PC-9 (cell line): ENCODE measurements at regions of chr1 and their contacts with region 1.

Region 1: DNA sequence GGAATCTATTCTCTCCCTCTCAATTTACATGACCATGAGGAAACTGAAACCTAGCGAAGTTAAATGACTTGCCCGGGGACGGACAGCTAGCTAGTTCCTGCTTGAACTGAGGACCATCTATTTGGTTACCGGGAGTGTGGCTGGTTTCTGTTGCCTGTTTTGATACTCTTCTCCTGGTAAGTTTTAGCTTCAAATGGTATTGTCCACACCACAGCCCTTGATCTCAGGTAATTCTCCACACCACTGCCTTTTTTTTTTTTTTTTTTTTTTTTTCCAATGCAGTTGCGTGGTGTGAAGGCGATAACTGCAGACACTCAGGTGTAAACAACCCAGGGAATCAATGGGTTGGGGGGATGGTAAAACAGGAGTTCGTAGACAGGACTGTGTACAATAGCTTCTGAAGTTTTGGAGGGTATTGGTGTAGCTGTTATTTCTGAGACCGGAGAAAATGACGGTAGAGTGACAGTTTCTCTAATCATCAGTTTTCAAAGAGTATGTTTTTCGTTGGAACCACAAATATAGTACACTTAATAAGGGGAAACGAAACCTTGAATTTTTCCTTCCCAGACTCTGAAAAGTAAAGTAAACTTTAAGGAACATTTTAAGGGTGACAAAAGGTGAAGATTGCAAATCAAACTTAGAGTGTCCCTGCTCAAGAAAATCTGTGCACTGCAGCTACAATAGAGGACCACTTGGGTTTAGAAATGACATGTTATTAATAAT is 125.3 kb upstream of the CACYBP start:
- DNase-seq: peak; percentile 30 to 50
- H3K4me3 ChIP-seq: peak overlapping the region; percentile 43
- H3K27ac ChIP-seq: peak overlapping the region; percentile 83
- H3K4me1 ChIP-seq: peaks cover 60% of the 10 kb centered on the region
- H3K27me3 ChIP-seq: no peaks in the 10 kb centered on the region
- CTCF ChIP-seq: no peak

Region 2: GRCh38 chr1:174789399-174789798 is 85.1 kb before region 1 on chr1:
- CTCF ChIA-PET with region 1: no interaction called
- POLR2A ChIA-PET with region 1: interaction called, 20 read pairs
- intact Hi-C with region 1: loop called (anchors 2 kb)
- DNase-seq: peak; percentile 3 to 51
- H3K4me3 ChIP-seq: no peak overlapping the region
- H3K27ac ChIP-seq: peak overlapping the region; percentile 90
- H3K4me1 ChIP-seq: peaks cover 31% of the 10 kb centered on the region
- H3K27me3 ChIP-seq: no peaks in the 10 kb centered on the region
- CTCF ChIP-seq: no peak

Region 3: DNA sequence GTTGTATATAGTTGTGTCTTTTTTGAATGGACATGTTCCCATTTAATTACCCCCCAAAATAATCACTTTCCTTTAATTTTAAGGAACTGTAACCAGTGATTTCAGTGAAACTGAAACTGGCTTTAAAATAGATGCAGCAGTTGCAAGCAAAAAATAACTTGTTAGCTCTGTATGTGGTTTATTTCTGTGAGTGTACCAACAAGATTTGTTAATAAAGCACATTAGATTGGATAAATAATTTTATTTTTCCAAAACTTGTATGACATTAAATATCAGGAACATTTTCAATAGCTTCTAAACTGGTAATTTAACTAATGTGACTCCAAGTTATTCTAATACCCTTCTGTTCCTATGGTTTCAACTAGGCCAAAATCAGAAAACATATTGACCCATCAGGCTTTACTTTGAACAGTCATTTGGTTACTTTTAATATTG is 59.0 kb before region 1 on chr1:
- CTCF ChIA-PET with region 1: interaction called, 17 read pairs
- POLR2A ChIA-PET with region 1: interaction called, 39 read pairs
- intact Hi-C with region 1: no loop called
- DNase-seq: no peak
- H3K4me3 ChIP-seq: no peak overlapping the region
- H3K27ac ChIP-seq: 0 out of 2 replicates have a peak overlapping the region, but pooled peaks have one; percentile 41
- H3K4me1 ChIP-seq: peaks cover 20% of the 10 kb centered on the region
- H3K27me3 ChIP-seq: no peaks in the 10 kb centered on the region
- CTCF ChIP-seq: no peak

Region 4: DNA sequence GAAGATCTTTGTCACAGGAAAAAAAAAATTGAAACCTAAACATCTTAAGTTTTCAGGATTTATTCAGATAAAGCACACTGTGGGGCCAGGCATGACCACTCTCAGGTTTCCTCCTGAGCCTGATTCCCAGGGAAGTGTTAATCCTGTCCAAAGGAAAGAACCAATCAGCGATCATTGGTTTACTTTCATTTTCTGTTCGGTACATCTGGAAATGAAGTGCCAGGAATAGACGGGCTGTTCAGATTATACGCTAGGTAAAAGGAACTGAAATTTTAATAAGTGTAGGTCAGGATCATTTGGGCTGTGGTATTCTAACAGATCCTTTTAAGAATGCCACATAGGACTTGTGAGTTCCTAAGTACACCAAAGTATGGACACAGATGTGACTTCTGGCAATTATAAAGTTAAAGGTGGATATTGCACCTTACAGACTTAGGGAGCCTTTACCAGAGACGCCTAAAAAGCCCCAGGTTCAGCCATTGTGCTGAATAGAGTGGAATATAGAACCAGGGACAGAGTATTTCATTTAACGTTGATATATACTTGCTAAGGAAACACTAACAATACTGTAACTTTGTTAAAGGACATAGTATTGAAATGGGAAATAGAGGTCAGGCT is 116.0 kb after region 1 on chr1:
- CTCF ChIA-PET with region 1: interaction called, 13 read pairs
- POLR2A ChIA-PET with region 1: no interaction called
- intact Hi-C with region 1: no loop called
- DNase-seq: no peak
- H3K4me3 ChIP-seq: peak overlapping the region; percentile 12; the same call in 1 of the 2 replicates
- H3K27ac ChIP-seq: no peak overlapping the region
- H3K4me1 ChIP-seq: no peaks in the 10 kb centered on the region
- H3K27me3 ChIP-seq: no peaks in the 10 kb centered on the region
- CTCF ChIP-seq: no peak

Region 5: GRCh38 chr1:175129997-175130648 is 255.6 kb after region 1 on chr1:
- CTCF ChIA-PET with region 1: no interaction called
- POLR2A ChIA-PET with region 1: interaction called, 12 read pairs
- intact Hi-C with region 1: no loop called
- DNase-seq: no peak
- H3K4me3 ChIP-seq: no peak overlapping the region
- H3K27ac ChIP-seq: no peak overlapping the region
- H3K4me1 ChIP-seq: no peaks in the 10 kb centered on the region
- H3K27me3 ChIP-seq: no peaks in the 10 kb centered on the region; the same call in 1 of the 2 replicates
- CTCF ChIP-seq: no peak

Region 6: GRCh38 chr1:175267716-175268384 is 393.4 kb after region 1 on chr1:
- CTCF ChIA-PET with region 1: no interaction called
- POLR2A ChIA-PET with region 1: no interaction called
- intact Hi-C with region 1: loop called (anchors 2 kb)
- DNase-seq: peak in 1 of 2 experiments; percentile 48
- H3K4me3 ChIP-seq: no peak overlapping the region
- H3K27ac ChIP-seq: peak overlapping the region; percentile 98
- H3K4me1 ChIP-seq: peaks cover 40% of the 10 kb centered on the region
- H3K27me3 ChIP-seq: no peaks in the 10 kb centered on the region
- CTCF ChIP-seq: no peak

Region 7: DNA sequence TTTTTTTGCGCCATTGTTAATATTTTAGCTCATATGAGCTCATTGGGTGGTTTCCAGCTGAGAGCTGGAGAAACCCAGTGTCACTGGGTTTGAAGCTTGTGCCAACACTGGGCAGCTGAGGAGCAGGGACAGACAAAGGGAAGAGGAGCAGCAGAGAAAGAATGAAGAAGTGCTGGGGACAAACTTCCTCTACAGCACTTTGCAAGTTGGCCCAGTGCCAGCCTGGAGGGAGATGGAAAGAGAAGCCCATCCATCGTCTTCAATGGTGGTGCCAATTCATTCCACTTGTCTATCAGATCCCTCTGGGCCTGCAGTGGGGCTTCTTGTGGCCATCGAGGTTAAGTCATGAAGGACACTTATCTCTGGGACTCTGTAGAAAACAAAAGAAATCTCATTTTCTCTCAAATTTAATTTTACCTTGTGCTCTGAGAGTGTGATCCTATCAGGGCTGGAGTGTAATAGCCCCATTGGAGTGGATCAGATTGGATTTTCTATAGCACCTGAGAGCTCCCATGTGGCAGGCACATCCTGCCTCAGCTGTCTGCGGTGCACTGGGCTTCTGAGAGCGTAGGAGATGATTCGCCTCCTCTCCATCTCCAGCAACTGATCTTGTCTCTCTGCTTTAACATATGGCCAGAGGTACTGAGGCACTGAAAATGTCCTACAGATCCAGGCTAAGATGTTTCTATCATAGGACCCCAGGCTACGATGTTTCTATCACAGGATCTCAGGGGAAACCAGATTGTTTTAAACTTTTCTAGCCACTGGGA is 754.2 kb after region 1 on chr1:
- CTCF ChIA-PET with region 1: no interaction called
- POLR2A ChIA-PET with region 1: no interaction called
- intact Hi-C with region 1: no loop called
- DNase-seq: no peak
- H3K4me3 ChIP-seq: no peak overlapping the region
- H3K27ac ChIP-seq: no peak overlapping the region
- H3K4me1 ChIP-seq: no peaks in the 10 kb centered on the region
- H3K27me3 ChIP-seq: peaks cover 12% of the 10 kb centered on the region; the same call in 1 of the 2 replicates
- CTCF ChIP-seq: no peak